ENCODE measurements at regions of chr2 and their contacts with region 1.

Region 1: GRCh38 chr2:237858294-237859081 is 935 bp upstream of the RAMP1 start:
- DNase-seq: peak; percentile 68
- ATAC-seq: peak; percentile 87
- H3K4me3 Mint-ChIP-seq: peak overlapping the region; percentile 11
- H3K27ac Mint-ChIP-seq: no peak overlapping the region
- H3K4me1 Mint-ChIP-seq: peaks cover 15% of the 10 kb centered on the region
- H3K27me3 Mint-ChIP-seq: peaks cover 29% of the 10 kb centered on the region

Region 2: DNA sequence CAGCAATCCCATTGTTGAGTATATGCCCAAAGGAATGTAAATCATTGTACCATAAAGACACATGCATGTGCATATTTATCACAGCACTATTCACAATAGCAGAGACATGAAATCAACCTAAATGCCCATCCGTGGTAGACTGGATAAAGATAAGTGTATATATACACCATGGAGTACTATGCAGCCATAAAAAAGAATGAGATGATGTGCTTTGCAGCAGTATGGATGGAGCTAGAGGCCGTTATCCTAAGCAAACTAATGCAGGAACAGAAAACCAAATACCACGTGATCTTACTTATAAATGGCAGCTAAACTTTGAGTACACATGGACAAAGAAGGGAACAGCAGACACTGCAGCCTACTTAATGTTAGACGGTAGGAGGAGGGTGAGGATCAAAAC is 17.4 kb before region 1 on chr2:
- CTCF ChIA-PET with region 1: no interaction called
- POLR2A ChIA-PET with region 1: no interaction called
- intact Hi-C with region 1: no loop called
- DNase-seq: no peak
- ATAC-seq: no peak
- H3K4me3 Mint-ChIP-seq: no peak overlapping the region
- H3K27ac Mint-ChIP-seq: no peak overlapping the region
- H3K4me1 Mint-ChIP-seq: no peaks in the 10 kb centered on the region
- H3K27me3 Mint-ChIP-seq: no peaks in the 10 kb centered on the region

Region 3: GRCh38 chr2:237898057-237898414 is 39.5 kb after region 1 on chr2:
- CTCF ChIA-PET with region 1: no interaction called
- POLR2A ChIA-PET with region 1: no interaction called
- intact Hi-C with region 1: loop called in 1 of 2 experiments (anchors 2 kb)
- DNase-seq: no peak
- ATAC-seq: no peak
- H3K4me3 Mint-ChIP-seq: no peak overlapping the region
- H3K27ac Mint-ChIP-seq: peak overlapping the region; percentile 92
- H3K4me1 Mint-ChIP-seq: peaks cover 37% of the 10 kb centered on the region
- H3K27me3 Mint-ChIP-seq: no peaks in the 10 kb centered on the region

Region 4: DNA sequence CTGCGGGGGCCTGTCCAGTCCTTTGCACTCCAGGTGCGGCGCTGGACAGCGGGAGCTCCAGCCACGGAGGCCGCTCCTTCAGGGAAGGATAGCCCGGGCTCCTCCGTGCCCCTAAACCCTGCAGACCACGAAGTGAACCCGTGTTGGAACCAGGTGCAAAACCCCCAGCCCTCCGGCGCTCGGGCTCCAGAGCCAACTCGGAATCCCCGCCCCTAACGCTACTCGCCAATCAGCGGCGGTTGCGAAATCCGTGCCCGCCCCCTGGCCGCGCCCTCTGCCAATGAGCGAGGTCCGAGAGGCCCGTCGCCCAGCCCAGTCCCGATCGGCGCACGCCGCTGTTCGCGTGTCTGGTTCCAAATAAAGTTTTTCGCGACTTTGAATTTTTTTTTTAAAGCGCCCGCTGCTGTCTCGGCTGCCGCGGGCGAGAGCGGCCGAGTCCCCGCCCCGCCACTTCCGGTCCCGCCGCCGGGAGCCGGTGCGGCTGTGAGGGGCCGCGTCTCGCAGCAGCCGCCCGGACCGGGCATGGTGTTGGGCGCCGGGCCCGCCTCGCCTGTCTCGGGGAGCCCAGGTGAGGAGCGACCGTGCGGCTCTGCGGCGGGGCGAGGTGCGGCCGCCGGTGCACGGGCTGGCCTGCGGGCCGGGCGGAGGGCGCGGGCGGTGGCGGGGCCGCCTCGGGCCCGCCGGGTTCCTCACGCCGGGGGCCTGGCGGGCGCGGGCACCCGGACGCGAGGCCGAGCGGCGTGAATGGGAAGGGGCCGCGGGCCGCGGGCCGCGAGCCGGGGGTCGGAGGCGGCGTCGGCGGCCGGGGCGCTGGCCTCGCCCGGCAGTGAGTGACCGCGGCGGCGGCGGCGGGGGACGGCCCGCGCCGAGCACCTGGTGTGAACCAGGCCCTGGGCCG is 108.3 kb after region 1 on chr2 and contains the start of gene UBE2F:
- CTCF ChIA-PET with region 1: no interaction called
- POLR2A ChIA-PET with region 1: no interaction called
- intact Hi-C with region 1: loop called in 1 of 2 experiments (anchors 2 kb)
- DNase-seq: peak; percentile 98
- ATAC-seq: peak; percentile 95
- H3K4me3 Mint-ChIP-seq: peak within 1 kb of the TSS; percentile 78
- H3K27ac Mint-ChIP-seq: peak within 1 kb of the TSS; percentile 88
- H3K4me1 Mint-ChIP-seq: peaks cover 38% of the 10 kb centered on the region
- H3K27me3 Mint-ChIP-seq: no peaks in the 10 kb centered on the region
- total RNA-seq, gene UBE2F: 59.2 to 75.5 TPM

Region 5: GRCh38 chr2:238106686-238107524 is 248.4 kb after region 1 on chr2:
- CTCF ChIA-PET with region 1: interaction called, 3 read pairs
- POLR2A ChIA-PET with region 1: no interaction called
- intact Hi-C with region 1: loop called in 1 of 2 experiments (anchors 5 kb)
- DNase-seq: peak; percentile 37
- ATAC-seq: peak; percentile 16
- H3K4me3 Mint-ChIP-seq: no peak overlapping the region
- H3K27ac Mint-ChIP-seq: no peak overlapping the region
- H3K4me1 Mint-ChIP-seq: no peaks in the 10 kb centered on the region
- H3K27me3 Mint-ChIP-seq: no peaks in the 10 kb centered on the region

Region 6: DNA sequence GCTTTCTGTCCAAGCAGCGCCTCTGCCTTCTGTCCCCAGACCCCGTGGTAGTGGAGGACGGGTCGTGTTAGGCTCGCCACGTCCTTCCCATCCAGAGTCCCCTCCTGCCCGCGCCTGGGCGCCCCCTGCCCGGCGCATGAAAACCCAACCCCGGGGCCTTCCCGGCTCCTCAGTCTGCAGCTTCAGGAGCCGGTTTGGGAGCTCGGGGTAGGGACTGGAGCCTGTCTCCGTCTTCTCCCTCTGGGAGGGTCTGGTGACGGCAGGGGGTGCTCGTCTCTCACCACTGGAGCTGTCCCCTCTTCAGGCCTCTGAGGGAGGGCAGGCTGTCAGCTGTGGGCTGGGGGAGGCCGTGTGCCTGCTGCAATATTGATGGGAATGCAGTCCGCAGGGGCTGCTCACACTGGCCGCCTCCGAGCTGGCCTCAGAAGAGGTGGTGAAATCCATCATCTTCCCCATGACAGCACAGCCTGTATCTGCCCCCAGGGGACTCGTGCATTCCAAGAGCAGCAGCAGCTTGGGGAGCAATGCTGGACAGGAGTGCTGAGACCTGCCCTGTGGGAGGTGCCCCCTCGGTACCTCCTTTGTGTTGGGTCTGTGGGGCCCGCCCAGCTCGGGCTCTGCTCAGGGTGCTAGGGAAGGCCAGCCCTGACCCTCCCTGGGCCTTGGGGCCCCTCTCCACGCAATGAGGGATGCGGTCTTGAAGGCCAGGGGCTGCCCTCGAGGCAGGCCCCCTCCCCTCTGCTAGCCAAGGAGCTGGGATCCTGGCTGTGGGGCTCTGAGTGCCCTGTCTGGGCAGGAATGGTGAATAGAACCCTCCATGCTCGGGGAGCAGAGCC is 262.2 kb after region 1 on chr2:
- CTCF ChIA-PET with region 1: no interaction called
- POLR2A ChIA-PET with region 1: no interaction called
- intact Hi-C with region 1: no loop called
- DNase-seq: no peak
- ATAC-seq: no peak
- H3K4me3 Mint-ChIP-seq: no peak overlapping the region
- H3K27ac Mint-ChIP-seq: no peak overlapping the region
- H3K4me1 Mint-ChIP-seq: no peaks in the 10 kb centered on the region
- H3K27me3 Mint-ChIP-seq: peaks cover 6% of the 10 kb centered on the region

Region 7: DNA sequence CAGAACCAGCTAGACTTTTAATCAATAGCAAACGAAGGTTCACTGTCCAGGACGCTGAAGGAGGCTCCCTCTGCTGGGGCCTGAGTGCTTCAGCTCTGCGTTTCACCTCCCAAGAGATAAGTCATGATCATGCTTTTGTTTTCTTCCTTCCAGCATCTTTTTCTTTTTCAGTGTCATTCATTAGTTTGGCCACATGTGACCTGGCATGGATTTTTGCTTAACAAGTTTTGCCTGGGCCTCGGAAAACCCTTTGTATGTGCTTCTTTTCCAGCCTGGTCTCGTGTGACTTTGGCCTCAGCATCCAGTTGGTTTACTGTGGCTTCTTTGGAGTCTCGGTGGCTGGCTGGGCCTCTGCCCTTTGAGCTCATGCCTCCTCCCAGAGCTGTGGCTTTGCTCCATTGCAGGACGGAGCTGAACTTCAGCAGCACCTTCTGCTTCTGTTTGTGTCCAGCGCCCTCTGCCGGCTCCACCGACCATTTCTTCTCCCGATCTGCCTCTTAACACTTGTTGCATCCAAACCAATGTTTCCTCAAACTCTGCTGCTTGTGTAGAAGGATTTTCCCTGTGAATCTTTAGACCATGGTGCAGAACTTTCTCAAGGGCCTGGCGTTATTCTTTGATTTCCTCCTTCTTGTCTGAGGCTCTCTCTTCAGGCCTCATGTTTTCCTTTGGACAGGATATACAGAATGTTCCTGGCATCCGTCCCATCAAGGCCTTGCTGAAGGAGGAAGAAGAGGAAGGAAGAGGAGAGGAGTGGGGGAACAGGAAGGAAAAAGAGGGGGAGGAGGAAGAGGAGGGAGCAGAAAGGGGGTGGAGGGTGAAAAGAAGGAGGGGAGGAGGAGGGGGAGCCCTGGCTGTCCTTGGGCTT is 404.9 kb after region 1 on chr2:
- CTCF ChIA-PET with region 1: interaction called, 8 read pairs
- POLR2A ChIA-PET with region 1: no interaction called
- intact Hi-C with region 1: loop called (anchors 1 to 5 kb)
- DNase-seq: peak; percentile 88
- ATAC-seq: peak; percentile 87
- H3K4me3 Mint-ChIP-seq: no peak overlapping the region
- H3K27ac Mint-ChIP-seq: peak overlapping the region; percentile 63
- H3K4me1 Mint-ChIP-seq: peaks cover 3% of the 10 kb centered on the region
- H3K27me3 Mint-ChIP-seq: no peaks in the 10 kb centered on the region